Right ventricle myocardium superior (tissue), 1 donor: ENCODE measurements at regions of chr19 and their contacts with region 1.

Region 1: DNA sequence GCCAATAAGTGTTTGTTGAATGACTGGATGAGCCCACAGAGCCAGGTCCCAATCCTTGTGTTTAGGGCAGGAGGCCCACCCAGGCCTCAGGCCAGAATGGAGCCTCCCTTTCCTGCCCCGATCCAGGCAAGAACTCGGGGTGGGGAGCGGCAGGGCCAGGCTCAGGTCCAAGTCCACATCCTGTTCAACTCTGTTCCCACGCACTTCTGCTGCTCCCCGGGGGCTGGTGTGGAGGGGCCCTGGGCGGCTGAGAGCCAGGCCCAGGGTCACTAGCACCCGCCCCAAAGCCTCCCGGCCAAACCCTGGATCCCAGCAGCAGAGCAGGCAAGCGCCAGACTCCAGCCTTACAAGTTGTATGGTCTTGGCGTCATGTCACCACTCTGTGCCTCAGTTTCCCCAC is 8.0 kb downstream of the ANGPTL8 start:
- DNase-seq: peak; percentile 90
- ATAC-seq: peak; percentile 80

Region 2: GRCh38 chr19:11279496-11280236 is 32.3 kb after region 1 on chr19:
- intact Hi-C with region 1: loop called (anchors 5 kb)
- DNase-seq: no peak
- ATAC-seq: no peak